Aorta (tissue), 5 donors: ENCODE measurements at regions of chr12 and their contacts with region 1.

Region 1: GRCh38 chr12:124767066-124767821 is 96.4 kb downstream of the SCARB1 start:
- DNase-seq: peak; percentile 88 to 94
- ATAC-seq: peak; percentile 89
- H3K4me3 ChIP-seq: no peak overlapping the region
- H3K27ac ChIP-seq: no peak overlapping the region
- H3K4me1 ChIP-seq: peaks cover 0 to 2% of the 10 kb centered on the region in 2 donors
- H3K27me3 ChIP-seq: no peaks in the 10 kb centered on the region

Region 2: GRCh38 chr12:124053851-124054250 is 713.4 kb before region 1 on chr12:
- intact Hi-C with region 1: loop called in 1 of 2 experiments (anchors 5 kb)
- DNase-seq: peak; percentile 62 to 75
- ATAC-seq: peak; percentile 73
- H3K4me3 ChIP-seq: no peak overlapping the region
- H3K27ac ChIP-seq: no peak overlapping the region
- H3K4me1 ChIP-seq: no peaks in the 10 kb centered on the region
- H3K27me3 ChIP-seq: no peaks in the 10 kb centered on the region

Region 3: GRCh38 chr12:124359671-124360581 is 407.3 kb before region 1 on chr12:
- intact Hi-C with region 1: loop called (anchors 5 to 10 kb)
- DNase-seq: peak; percentile 91 to 97
- ATAC-seq: peak; percentile 88
- H3K4me3 ChIP-seq: no peak overlapping the region
- H3K27ac ChIP-seq: peak overlapping the region in 1 of 2 donors; percentile 9
- H3K4me1 ChIP-seq: no peaks in the 10 kb centered on the region
- H3K27me3 ChIP-seq: no peaks in the 10 kb centered on the region

Region 4: GRCh38 chr12:124379938-124380754 is 387.1 kb before region 1 on chr12:
- intact Hi-C with region 1: loop called in 1 of 2 experiments (anchors 5 kb)
- DNase-seq: peak; percentile 93 to 96
- ATAC-seq: peak; percentile 86
- H3K4me3 ChIP-seq: no peak overlapping the region
- H3K27ac ChIP-seq: peak overlapping the region; percentile 10 to 85
- H3K4me1 ChIP-seq: no peaks in the 10 kb centered on the region
- H3K27me3 ChIP-seq: no peaks in the 10 kb centered on the region

Region 5: GRCh38 chr12:124518051-124518932 is 249.0 kb before region 1 on chr12:
- intact Hi-C with region 1: loop called in 1 of 2 experiments (anchors 5 kb)
- DNase-seq: peak; percentile 98 to 99
- ATAC-seq: peak; percentile 84
- H3K4me3 ChIP-seq: no peak overlapping the region
- H3K27ac ChIP-seq: peak overlapping the region; percentile 87 to 98
- H3K4me1 ChIP-seq: no peaks in the 10 kb centered on the region
- H3K27me3 ChIP-seq: no peaks in the 10 kb centered on the region

Region 6: DNA sequence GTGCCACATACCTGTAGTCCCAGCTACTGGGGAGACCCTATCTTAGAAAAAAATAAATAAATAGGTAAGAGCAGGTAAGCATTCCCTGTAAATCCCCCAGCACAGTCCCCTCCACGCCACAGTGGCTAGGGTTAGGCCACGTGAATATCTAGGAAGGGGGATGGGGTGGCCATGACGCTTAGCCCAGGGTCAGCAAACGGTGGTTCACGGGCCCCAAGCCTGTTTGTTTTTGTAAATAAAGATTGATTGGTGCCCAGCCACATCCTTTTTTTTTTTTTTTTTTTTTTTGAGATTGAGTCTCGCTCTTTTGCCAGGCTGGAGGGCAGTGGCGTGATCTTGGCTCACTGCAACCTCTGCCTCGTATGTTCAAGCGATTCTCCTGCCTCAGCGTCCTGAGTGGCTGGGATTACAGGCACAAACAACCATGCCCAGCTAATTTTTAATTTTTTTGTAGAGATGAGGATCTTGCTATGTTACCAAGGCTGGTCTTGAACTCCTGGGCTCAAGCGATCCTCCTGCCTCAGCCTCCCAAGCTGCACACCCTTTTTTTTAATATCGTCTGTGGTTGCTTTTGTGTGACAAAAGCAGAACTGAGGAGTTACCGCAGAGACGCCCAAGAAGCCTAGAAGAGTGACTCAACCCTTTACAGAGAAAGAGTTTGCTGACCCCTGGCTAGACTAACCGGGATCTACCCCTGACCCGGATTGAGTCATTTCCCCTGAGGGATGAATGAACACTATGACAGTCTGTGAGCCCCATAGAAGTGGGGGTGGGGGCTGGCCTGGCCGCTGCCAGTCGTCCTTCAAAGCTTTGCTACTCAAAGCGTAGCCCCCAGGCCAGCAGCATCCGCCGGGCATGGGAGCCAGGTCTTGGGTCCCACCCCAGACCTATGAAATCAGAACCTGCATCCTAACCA is 86.1 kb before region 1 on chr12:
- intact Hi-C with region 1: loop called (anchors 5 kb)
- DNase-seq: peak; percentile 89 to 90
- ATAC-seq: peak; percentile 76
- H3K4me3 ChIP-seq: no peak overlapping the region
- H3K27ac ChIP-seq: peak overlapping the region in 1 of 2 donors; percentile 53
- H3K4me1 ChIP-seq: peaks cover 0 to 3% of the 10 kb centered on the region in 2 donors
- H3K27me3 ChIP-seq: no peaks in the 10 kb centered on the region

Region 7: GRCh38 chr12:124786061-124786964 is 19.1 kb after region 1 on chr12:
- intact Hi-C with region 1: no loop called
- DNase-seq: peak; percentile 89 to 93
- ATAC-seq: peak; percentile 90
- H3K4me3 ChIP-seq: peak overlapping the region in 1 of 2 donors; percentile 27
- H3K27ac ChIP-seq: no peak overlapping the region
- H3K4me1 ChIP-seq: no peaks in the 10 kb centered on the region
- H3K27me3 ChIP-seq: no peaks in the 10 kb centered on the region

Region 8: DNA sequence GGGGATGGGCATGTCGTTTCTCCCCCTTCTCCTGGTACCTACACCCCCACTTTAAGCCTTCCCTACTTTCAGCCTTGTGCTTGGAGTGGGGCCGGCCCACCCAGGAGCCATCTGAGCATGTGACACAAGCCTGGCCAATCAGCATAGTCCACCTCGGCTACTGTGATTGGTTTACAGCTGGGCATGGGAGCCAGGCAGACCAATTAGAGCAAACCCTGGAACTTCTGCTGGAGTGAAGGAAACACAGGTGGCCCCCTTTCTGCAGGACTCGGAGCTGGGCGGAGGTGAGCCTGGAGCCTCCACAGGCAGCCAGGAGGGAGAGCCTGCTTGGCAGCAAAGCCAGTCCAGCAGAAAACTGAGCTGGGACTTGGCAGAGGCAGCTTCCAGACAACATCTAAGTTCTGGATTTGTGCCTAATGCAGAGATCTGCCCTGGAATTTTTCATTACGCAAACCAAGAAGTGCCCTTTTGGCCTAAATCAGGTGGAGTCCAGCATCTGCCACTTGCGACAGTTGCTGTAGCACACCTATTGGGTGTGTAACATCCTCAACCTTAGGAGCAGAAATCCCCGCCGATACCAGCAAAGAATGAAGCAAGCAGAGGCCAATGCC is 36.9 kb after region 1 on chr12:
- intact Hi-C with region 1: no loop called
- DNase-seq: peak in 1 of 2 donors; percentile 55
- ATAC-seq: peak; percentile 48
- H3K4me3 ChIP-seq: no peak overlapping the region
- H3K27ac ChIP-seq: no peak overlapping the region
- H3K4me1 ChIP-seq: no peaks in the 10 kb centered on the region
- H3K27me3 ChIP-seq: no peaks in the 10 kb centered on the region